PC-9 (cell line): ENCODE measurements at regions of chr16 and their contacts with region 1.

Region 1: GRCh38 chr16:75860326-75861053 is 134.2 kb upstream of the CPHXL start:
- DNase-seq: no peak
- H3K4me3 ChIP-seq: no peak overlapping the region
- H3K27ac ChIP-seq: no peak overlapping the region
- H3K4me1 ChIP-seq: no peaks in the 10 kb centered on the region
- H3K27me3 ChIP-seq: peaks cover 50% of the 10 kb centered on the region
- CTCF ChIP-seq: no peak

Region 2: DNA sequence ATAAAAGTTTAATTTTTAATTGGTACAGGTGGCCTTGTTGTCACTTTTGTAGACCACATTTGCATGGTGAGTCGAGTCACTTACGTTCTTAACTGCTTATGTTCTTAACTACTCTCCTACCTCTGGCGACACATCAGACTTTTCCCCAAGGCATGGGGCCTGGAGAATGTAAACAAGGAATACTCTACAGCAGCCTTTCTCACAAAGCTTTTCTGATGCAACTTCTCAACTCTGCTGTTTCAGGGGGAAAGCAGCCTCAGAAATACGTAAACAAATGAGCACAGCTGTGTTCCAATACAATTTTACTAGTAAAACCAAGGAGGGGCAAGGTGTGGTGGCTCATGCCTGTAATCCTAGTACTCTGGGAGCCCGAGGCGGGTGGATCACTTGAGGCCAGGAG is 219.9 kb before region 1 on chr16:
- CTCF ChIA-PET with region 1: no interaction called
- POLR2A ChIA-PET with region 1: no interaction called
- intact Hi-C with region 1: no loop called
- DNase-seq: no peak
- H3K4me3 ChIP-seq: no peak overlapping the region
- H3K27ac ChIP-seq: no peak overlapping the region
- H3K4me1 ChIP-seq: no peaks in the 10 kb centered on the region
- H3K27me3 ChIP-seq: no peaks in the 10 kb centered on the region
- CTCF ChIP-seq: no peak

Region 3: GRCh38 chr16:77158293-77158692 is 1297.8 kb after region 1 on chr16:
- CTCF ChIA-PET with region 1: interaction called, 10 read pairs
- POLR2A ChIA-PET with region 1: no interaction called
- intact Hi-C with region 1: no loop called
- DNase-seq: no peak
- H3K4me3 ChIP-seq: no peak overlapping the region
- H3K27ac ChIP-seq: no peak overlapping the region
- H3K4me1 ChIP-seq: no peaks in the 10 kb centered on the region
- H3K27me3 ChIP-seq: peaks cover 81% of the 10 kb centered on the region
- CTCF ChIP-seq: no peak